ENCODE measurements at regions of chr7 and their contacts with region 1.

Region 1: GRCh38 chr7:149028346-149029109 is at the start of gene PDIA4:
- DNase-seq: peak; percentile 100
- H3K4me3 Mint-ChIP-seq: peak within 1 kb of the TSS; percentile 98
- H3K27ac Mint-ChIP-seq: peak within 1 kb of the TSS; percentile 93
- H3K4me1 Mint-ChIP-seq: peaks cover 34% of the 10 kb centered on the region
- H3K27me3 Mint-ChIP-seq: peaks cover 2% of the 10 kb centered on the region
- total RNA-seq, gene PDIA4: 132 and 142 TPM in 2 replicates

Region 2: GRCh38 chr7:148884299-148885022 is 144.1 kb before region 1 on chr7:
- intact Hi-C with region 1: loop called (anchors 1 kb)
- DNase-seq: peak; percentile 95
- H3K4me3 Mint-ChIP-seq: peak overlapping the region; percentile 93
- H3K27ac Mint-ChIP-seq: peak overlapping the region; percentile 98
- H3K4me1 Mint-ChIP-seq: peaks cover 43% of the 10 kb centered on the region
- H3K27me3 Mint-ChIP-seq: no peaks in the 10 kb centered on the region

Region 3: GRCh38 chr7:148994601-148995000 is 33.9 kb before region 1 on chr7:
- intact Hi-C with region 1: no loop called
- DNase-seq: no peak
- H3K4me3 Mint-ChIP-seq: no peak overlapping the region
- H3K27ac Mint-ChIP-seq: no peak overlapping the region
- H3K4me1 Mint-ChIP-seq: no peaks in the 10 kb centered on the region
- H3K27me3 Mint-ChIP-seq: no peaks in the 10 kb centered on the region

Region 4: DNA sequence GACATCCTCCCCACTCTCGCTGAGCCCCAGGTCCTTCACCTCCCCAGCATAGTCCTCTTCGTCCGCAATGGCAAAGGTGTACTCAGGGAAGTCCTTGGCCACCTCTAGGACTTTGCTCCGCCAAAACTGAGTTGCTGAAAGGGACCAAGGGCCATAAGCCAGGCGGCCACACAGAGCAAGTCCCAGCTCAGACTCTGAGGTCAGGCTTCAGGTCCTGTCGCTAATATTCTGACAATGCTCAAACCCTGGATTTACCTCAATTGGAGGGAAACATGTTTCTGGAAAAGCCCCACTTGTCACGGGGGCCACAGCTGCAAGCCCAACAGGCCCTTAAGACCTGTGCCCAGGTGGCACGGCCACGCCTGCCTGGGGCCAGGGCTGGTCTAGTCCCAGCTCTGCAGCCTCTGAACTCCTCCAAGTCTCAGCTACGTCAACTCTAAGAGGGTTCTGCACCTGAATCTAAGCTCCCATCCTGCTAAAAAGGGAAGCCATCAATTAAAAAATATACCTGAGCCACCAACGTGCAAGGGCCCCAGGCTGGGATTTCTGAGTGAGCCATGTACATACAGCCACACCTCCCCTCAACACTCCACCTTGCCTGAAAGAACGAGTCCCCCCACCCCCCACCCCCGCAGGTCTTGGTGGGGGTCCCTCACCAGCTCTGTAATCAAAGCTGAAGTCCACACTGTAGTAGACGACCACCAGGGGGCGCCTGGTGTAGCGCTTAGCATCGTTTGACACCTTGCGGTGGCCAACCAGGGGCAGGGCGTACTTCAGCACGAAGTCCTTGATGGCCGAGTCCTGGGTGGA is 23.1 kb before region 1 on chr7:
- intact Hi-C with region 1: loop called (anchors 1 kb)
- DNase-seq: peak; percentile 65
- H3K4me3 Mint-ChIP-seq: no peak overlapping the region
- H3K27ac Mint-ChIP-seq: no peak overlapping the region
- H3K4me1 Mint-ChIP-seq: no peaks in the 10 kb centered on the region
- H3K27me3 Mint-ChIP-seq: no peaks in the 10 kb centered on the region

Region 5: GRCh38 chr7:149067876-149068275 is 39.3 kb after region 1 on chr7:
- intact Hi-C with region 1: loop called (anchors 1 kb)
- DNase-seq: no peak
- H3K4me3 Mint-ChIP-seq: peak overlapping the region; percentile 12
- H3K27ac Mint-ChIP-seq: no peak overlapping the region
- H3K4me1 Mint-ChIP-seq: peaks cover 8% of the 10 kb centered on the region
- H3K27me3 Mint-ChIP-seq: no peaks in the 10 kb centered on the region

Region 6: DNA sequence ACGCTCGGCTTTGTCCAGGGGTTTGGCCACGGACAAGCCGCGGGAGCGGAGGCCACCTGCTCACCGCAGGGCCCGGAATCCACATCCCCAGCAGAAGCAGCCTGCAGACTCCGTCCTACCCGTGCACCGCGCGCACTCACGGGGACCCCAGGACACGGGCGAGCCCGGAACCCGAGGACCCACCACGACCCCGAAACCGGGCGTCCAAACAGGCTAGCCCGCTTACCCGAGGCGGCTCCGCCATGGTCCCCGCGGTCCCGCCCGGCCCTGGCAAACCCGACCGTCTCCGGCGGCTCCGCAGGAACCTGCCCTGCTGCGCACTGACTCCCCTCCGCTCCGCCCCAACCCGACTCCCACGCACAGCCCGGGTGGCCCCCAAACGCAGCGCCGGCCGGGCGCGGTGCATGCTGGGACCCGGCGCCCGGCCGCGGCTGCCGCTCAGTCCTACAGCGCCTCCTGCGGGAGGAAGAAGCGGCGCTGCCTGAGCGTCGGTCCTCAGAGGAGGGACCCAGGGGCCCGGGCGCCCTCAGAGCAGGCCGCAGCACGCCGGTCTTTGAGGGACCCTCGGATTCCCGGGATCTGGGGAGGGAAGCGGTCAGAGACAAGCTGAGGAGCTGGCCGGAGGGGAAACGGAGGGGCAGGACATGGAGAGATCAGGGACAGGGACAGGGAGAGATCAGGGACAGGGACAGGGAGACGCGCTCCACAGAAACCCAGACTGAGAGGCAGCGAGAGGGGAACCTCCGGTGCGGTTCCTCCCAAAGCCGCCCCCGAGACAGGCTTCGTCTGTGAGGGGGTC is 62.1 kb after region 1 on chr7 and contains the start of gene ZNF786:
- intact Hi-C with region 1: loop called (anchors 1 kb)
- DNase-seq: peak; percentile 87
- H3K4me3 Mint-ChIP-seq: peak within 1 kb of the TSS; percentile 99
- H3K27ac Mint-ChIP-seq: peak within 1 kb of the TSS; percentile 100
- H3K4me1 Mint-ChIP-seq: peaks cover 17% of the 10 kb centered on the region
- H3K27me3 Mint-ChIP-seq: peaks cover 2% of the 10 kb centered on the region
- total RNA-seq, gene ZNF786: 9.9 and 10.9 TPM in 2 replicates

Region 7: DNA sequence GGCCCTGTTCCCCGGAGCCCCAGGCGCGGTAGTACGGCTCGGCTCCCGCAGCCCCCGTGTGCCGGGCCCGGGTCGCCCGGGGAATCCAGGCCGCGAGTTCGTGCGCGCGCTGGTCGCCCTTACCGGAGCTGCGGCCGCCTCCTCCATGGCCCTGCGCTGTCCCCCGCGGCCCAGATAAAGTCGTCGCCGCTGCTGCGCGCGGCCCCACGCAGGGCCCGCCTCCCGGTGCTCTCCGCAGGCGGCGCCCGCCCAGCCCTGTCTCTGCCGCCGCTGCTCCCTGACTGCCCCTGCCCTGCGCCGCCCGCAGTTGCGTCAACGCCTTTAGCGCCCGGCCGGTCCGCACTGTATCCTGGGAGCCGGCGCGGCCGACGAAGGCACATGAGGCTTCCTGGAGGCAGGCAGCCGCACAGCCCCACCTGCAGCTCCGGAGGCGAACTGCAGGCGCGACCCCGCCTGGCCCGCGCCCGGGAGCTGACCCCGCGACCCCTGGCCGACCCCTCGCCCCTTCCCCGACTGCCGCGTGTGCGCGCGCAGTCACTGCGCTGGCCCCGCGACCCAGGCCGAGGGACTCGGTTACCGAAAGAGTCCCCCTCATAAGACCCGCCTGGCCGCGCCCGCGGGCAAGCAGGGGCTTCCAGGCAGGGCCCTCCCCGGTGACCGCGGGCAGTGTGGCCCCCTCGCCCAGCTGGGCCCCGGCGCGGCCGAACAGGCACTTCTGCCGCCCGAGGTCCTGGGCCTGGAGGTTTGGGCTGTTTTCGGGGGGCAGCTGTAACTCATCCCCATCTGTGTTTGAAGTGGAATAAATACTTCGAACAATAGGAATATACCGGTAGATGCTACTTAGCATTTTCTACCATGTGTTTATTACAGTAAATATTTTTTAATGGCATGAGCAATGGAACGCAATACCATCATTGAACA is 596.2 kb after region 1 on chr7:
- intact Hi-C with region 1: loop called (anchors 10 kb)
- DNase-seq: peak; percentile 91
- H3K4me3 Mint-ChIP-seq: peak overlapping the region; percentile 89
- H3K27ac Mint-ChIP-seq: peak overlapping the region; percentile 83
- H3K4me1 Mint-ChIP-seq: peaks cover 32% of the 10 kb centered on the region
- H3K27me3 Mint-ChIP-seq: peaks cover 6% of the 10 kb centered on the region

Measured in activated T-helper 1 cell treated with anti-CD3 and anti-CD28 coated beads, Interleukin-12 subunit alpha, Interleukin-12 subunit beta, Interleukin-2, Interleukin-4 antibody, amounts not matched to agents 30 ng/mL and 10 ng/mL and 1 ng/mL, durations not matched to agents 14 hours and 24 hours and 36 hours (primary cell).